ENCODE measurements at regions of chr11 and their contacts with region 1.

Region 1: GRCh38 chr11:111841370-111842053 is 29.9 kb downstream of the ALG9 start:
- DNase-seq: peak; percentile 75
- CTCF ChIP-seq: peak; percentile 82

Region 2: GRCh38 chr11:111586388-111586831 is 255.1 kb before region 1 on chr11:
- in situ Hi-C with region 1: loop called (anchors 10 kb)
- DNase-seq: peak; percentile 47
- CTCF ChIP-seq: peak; percentile 48

Region 3: GRCh38 chr11:111719379-111719778 is 122.1 kb before region 1 on chr11:
- in situ Hi-C with region 1: no loop called
- DNase-seq: no peak
- CTCF ChIP-seq: no peak

Region 4: GRCh38 chr11:111766093-111766833 is 75.2 kb before region 1 on chr11 and contains the start of gene PPP2R1B:
- in situ Hi-C with region 1: no loop called
- DNase-seq: peak; percentile 97
- CTCF ChIP-seq: no peak

Region 5: GRCh38 chr11:112195906-112196305 is 354.4 kb after region 1 on chr11:
- in situ Hi-C with region 1: no loop called
- DNase-seq: no peak
- CTCF ChIP-seq: no peak

Region 6: GRCh38 chr11:112265721-112266409 is 424.4 kb after region 1 on chr11:
- in situ Hi-C with region 1: no loop called
- DNase-seq: no peak
- CTCF ChIP-seq: no peak

Measured in GM13976 (cell line).